B cell (primary cell): ENCODE measurements at regions of chr9 and their contacts with region 1.

Region 1: DNA sequence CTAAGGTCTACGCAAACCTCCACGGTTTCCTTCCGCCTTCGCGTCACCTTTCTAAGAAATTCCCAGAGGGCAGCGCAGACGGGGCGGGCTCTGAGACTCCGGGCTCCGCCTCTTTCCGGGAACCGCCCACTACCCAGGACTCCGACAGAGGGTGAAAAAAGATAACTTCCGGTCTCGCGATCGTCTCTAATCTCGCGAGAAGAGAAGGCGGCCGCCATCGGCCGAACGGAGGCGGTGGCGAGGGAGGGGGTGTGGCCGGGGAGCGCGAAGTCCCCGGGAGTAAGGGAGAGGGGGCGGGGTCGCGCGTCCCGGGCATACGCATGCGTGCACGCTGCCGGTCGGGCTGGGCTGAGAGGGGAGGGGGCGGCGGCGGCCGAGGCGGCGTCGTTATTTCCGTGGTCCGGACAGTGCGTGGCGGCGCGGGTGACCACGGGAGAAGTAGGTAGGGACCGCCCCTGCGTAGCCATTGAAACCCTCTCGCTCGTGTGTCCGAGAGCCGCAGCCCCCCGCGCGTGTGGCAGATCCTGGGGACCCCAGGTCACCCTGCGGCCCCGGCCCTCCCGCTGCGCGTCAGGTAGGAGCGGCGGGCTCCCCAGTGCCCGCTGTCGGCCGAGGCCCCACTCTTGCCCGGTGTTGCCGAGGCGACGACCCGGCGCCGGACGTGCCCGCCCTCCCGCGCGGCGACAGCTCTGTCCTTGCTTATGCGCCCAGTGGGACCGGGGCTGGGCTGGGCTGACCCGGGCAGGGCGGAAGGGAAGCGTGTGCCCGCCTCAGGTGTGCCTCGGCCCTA is at the start of gene NAA35:
- DNase-seq: peak; percentile 100
- ATAC-seq: peak; percentile 85
- H3K4me3 ChIP-seq: peak within 1 kb of the TSS; percentile 59 to 94 (median 85)
- H3K4me3 Mint-ChIP-seq: peak within 1 kb of the TSS; percentile 92
- H3K27ac ChIP-seq: peak within 1 kb of the TSS; percentile 79 to 90
- H3K27ac Mint-ChIP-seq: peak within 1 kb of the TSS; percentile 93
- H3K4me1 ChIP-seq: peaks cover 22 to 26% of the 10 kb centered on the region in 2 donors
- H3K4me1 Mint-ChIP-seq: peaks cover 27% of the 10 kb centered on the region
- H3K27me3 ChIP-seq: peaks cover 0 to 7% (median 0%) of the 10 kb centered on the region in 4 experiments
- H3K27me3 Mint-ChIP-seq: peaks cover 10% of the 10 kb centered on the region
- CTCF ChIP-seq: no peak
- total RNA-seq, gene NAA35: 26.1 and 26.2 TPM in 2 replicates

Region 2: GRCh38 chr9:85741875-85742629 is 199.0 kb before region 1 on chr9 and contains the start of gene AGTPBP1:
- CTCF ChIA-PET with region 1: no interaction called
- POLR2A ChIA-PET with region 1: no interaction called
- intact Hi-C with region 1: loop called (anchors 1 kb)
- DNase-seq: peak; percentile 97
- ATAC-seq: peak; percentile 92
- H3K4me3 ChIP-seq: peak within 1 kb of the TSS; percentile 80 to 91 (median 82)
- H3K4me3 Mint-ChIP-seq: peak within 1 kb of the TSS; percentile 99
- H3K27ac ChIP-seq: peak within 1 kb of the TSS; percentile 76 to 96
- H3K27ac Mint-ChIP-seq: peak within 1 kb of the TSS; percentile 96
- H3K4me1 ChIP-seq: peaks cover 9 to 11% of the 10 kb centered on the region in 2 donors
- H3K4me1 Mint-ChIP-seq: peaks cover 21% of the 10 kb centered on the region
- H3K27me3 ChIP-seq: peaks cover 0 to 3% (median 0%) of the 10 kb centered on the region in 4 experiments
- H3K27me3 Mint-ChIP-seq: peaks cover 7% of the 10 kb centered on the region
- CTCF ChIP-seq: no peak
- total RNA-seq, gene AGTPBP1: 33.1 and 35.4 TPM in 2 replicates